A549 (cell line): ENCODE measurements at regions of chr9 and their contacts with region 1.

Region 1: GRCh38 chr9:38017149-38017884 is 51.7 kb downstream of the SHB start:
- DNase-seq: peak; percentile 63 to 73
- ATAC-seq: peak; percentile 55 to 58; a peak in 5 of 6 replicates
- H3K4me3 ChIP-seq: 0 out of 3 replicates have a peak overlapping the region, but pooled peaks have one; percentile 7
- H3K27ac ChIP-seq: peak overlapping the region; percentile 96 to 97
- H3K4me1 ChIP-seq: peaks cover 68% of the 10 kb centered on the region
- CTCF ChIP-seq: peak; percentile 60
- EP300 ChIP-seq: no peak; a peak in 1 of 5 replicates
- POLR2A ChIP-seq: no peak
- RAD21 ChIP-seq: peak; percentile 81 to 84

Region 2: GRCh38 chr9:38035873-38036272 is 18.6 kb after region 1 on chr9:
- CTCF ChIA-PET with region 1: interaction called, 73 read pairs
- POLR2A ChIA-PET with region 1: no interaction called
- DNase-seq: peak; percentile 61 to 62
- ATAC-seq: peak; percentile 49 to 63
- H3K4me3 ChIP-seq: no peak overlapping the region
- H3K27ac ChIP-seq: peak overlapping the region; percentile 84 to 97
- H3K4me1 ChIP-seq: peaks cover 96% of the 10 kb centered on the region
- CTCF ChIP-seq: no peak
- EP300 ChIP-seq: peak in 1 of 2 experiments; percentile 31; a peak in 1 of 5 replicates
- POLR2A ChIP-seq: no peak
- RAD21 ChIP-seq: no peak

Region 3: DNA sequence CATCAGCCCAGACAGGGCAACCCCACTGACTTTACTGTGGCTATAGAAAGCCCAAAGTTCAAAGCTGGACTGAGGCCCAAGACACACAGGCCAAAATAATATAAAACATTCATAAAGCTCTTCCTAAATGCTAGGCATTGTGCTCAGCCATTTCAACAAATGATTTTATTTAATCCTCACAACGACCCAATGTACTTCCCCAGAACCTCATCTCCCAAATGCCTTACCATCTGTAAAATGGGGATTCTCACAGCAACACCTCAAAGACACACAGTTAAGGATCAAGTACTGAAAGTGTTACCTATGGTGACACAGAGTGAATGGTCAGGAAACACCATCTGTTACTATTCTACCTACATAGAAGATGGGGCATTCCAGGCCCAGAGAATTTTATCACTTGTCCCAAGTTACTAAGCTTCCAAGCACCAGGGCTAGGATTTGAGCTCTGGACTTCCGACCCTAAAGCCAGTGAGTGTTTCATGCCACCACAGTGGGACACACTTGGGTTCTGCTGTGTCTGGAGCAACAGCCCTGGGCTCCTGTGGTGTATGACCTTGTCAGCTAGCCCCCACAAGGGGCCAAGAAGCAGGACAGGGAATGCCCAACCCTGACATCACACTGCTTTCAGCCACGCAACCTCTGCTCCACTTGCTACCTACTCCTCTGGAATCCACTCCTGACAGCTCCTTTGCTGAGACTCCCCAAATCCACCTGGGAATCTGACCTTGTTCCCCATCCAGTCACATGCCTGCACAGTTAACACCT is 36.6 kb after region 1 on chr9:
- CTCF ChIA-PET with region 1: interaction called, 49 read pairs
- POLR2A ChIA-PET with region 1: no interaction called
- DNase-seq: no peak
- ATAC-seq: no peak
- H3K4me3 ChIP-seq: no peak overlapping the region
- H3K27ac ChIP-seq: peak overlapping the region in 1 of 2 experiments; percentile 56; a peak in 2 of 6 replicates
- H3K4me1 ChIP-seq: peaks cover 64% of the 10 kb centered on the region
- CTCF ChIP-seq: no peak
- EP300 ChIP-seq: no peak
- POLR2A ChIP-seq: no peak
- RAD21 ChIP-seq: no peak

Region 4: GRCh38 chr9:38061326-38061977 is 44.1 kb after region 1 on chr9:
- CTCF ChIA-PET with region 1: interaction called, 49 read pairs
- POLR2A ChIA-PET with region 1: no interaction called
- DNase-seq: no peak
- ATAC-seq: no peak
- H3K4me3 ChIP-seq: no peak overlapping the region
- H3K27ac ChIP-seq: peak overlapping the region in 1 of 2 experiments; percentile 81; a peak in 4 of 6 replicates
- H3K4me1 ChIP-seq: peaks cover 99% of the 10 kb centered on the region
- CTCF ChIP-seq: no peak
- EP300 ChIP-seq: no peak
- POLR2A ChIP-seq: no peak
- RAD21 ChIP-seq: no peak

Region 5: GRCh38 chr9:38183994-38184568 is 166.8 kb after region 1 on chr9:
- CTCF ChIA-PET with region 1: no interaction called
- POLR2A ChIA-PET with region 1: no interaction called
- DNase-seq: no peak
- ATAC-seq: no peak
- H3K4me3 ChIP-seq: no peak overlapping the region
- H3K27ac ChIP-seq: no peak overlapping the region
- H3K4me1 ChIP-seq: peaks cover 13% of the 10 kb centered on the region; the same call in 2 of the 3 replicates
- CTCF ChIP-seq: no peak
- EP300 ChIP-seq: no peak
- POLR2A ChIP-seq: no peak
- RAD21 ChIP-seq: no peak

Region 6: GRCh38 chr9:38251036-38251860 is 233.9 kb after region 1 on chr9:
- CTCF ChIA-PET with region 1: no interaction called
- POLR2A ChIA-PET with region 1: no interaction called
- DNase-seq: no peak
- ATAC-seq: no peak
- H3K4me3 ChIP-seq: no peak overlapping the region
- H3K27ac ChIP-seq: no peak overlapping the region
- H3K4me1 ChIP-seq: no peaks in the 10 kb centered on the region
- CTCF ChIP-seq: no peak
- EP300 ChIP-seq: no peak
- POLR2A ChIP-seq: no peak
- RAD21 ChIP-seq: no peak